H1 (cell line): ENCODE measurements at regions of chr14 and their contacts with region 1.

Region 1: DNA sequence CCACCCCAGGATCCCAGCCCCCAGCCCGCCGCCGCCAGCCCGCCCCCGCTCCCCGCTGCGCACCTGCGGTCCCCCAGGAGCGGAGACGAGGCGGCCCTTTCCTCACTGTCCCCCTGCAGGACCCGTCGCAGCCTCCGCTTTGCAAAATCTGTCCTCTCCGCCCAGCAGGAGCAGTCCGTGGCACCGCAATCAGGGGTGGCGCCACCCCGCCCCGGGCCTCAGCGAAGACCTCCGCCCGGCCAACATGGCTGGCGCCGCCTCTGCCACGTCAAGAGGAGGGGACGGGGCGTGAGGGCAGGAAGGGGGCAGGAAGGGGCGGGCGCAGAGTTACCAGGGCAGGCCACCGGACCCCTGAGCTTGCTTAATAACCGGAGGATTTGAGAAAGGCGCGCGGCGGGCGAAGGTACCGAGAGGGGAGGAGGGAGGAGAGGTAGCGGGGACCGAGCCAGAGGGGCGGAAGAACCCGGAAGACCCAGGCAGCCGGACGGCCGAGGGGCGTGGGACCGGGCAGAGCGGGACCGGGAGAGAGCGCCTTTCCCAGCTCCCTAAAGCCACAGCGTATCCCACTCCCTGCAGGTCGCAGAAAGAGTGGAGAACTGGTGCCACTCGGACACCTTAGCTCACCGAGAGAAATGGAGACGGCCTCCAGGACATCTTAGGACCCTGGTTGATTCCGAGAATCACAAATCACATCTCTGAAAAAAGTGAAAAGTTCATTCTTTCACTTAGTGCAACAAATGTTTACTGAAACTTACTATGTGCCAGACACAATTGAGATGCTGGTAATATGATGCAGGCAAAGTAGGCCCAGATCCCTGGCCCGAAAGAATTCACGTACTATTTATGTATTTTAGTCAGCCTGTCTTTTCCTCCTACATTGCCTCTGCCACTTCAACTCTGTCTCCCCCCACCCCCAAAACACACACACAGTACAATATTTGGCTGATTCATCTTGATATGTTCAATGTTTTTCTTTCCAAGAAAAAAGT is at the start of gene SEC23A:
- DNase-seq: peak; percentile 85 to 92
- H3K4me3 ChIP-seq: peak within 1 kb of the TSS; percentile 81 to 85 (median 82)
- H3K27ac ChIP-seq: peak within 1 kb of the TSS; percentile 79
- H3K4me1 ChIP-seq: peaks cover 0 to 3% (median 1%) of the 10 kb centered on the region in 4 experiments; a peak in 3 of 7 replicates
- H3K27me3 ChIP-seq: no peaks in the 10 kb centered on the region
- CTCF ChIP-seq: no peak
- EP300 ChIP-seq: no peak
- POLR2A ChIP-seq: peak; percentile 67 to 81
- RAD21 ChIP-seq: no peak
- total RNA-seq, gene SEC23A: 58.2 and 60.9 TPM in 2 replicates

Region 2: DNA sequence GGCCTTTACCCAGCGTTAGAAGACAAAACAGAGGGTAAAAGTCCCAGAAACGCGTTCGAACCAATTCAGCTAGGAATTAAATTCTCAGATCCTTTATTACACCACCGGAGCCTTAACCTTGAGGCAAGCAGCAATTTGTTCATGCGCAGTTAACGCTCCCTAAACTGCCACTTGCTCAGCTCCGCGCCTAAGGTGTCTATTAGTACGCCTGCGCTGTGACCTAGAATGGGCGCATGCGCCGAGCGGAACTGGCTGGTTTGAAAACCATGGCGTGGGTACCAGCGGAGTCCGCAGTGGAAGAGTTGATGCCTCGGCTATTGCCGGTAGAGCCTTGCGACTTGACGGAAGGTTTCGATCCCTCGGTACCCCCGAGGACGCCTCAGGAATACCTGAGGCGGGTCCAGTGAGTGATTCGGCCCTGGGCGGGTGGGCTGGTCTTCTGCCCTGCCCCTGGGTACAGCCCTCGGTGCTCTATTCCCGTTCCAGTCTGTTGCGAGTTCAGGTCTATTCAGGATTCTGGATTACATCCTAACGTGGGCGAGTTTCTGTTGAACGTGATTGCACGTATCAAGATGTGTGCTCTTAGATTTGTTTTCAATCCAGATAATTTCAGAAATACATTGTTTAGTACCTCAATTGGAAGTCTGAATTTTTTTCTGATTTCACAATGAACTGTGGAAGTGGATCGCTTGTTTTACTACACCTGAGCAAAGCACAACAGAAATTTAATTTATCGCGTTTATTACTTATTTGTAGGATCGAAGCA is 11.0 kb after region 1 on chr14 and contains the start of gene GEMIN2:
- CTCF ChIA-PET with region 1: interaction called, 3 read pairs
- POLR2A ChIA-PET with region 1: interaction called, 18 read pairs
- DNase-seq: peak; percentile 79 to 94
- H3K4me3 ChIP-seq: peak within 1 kb of the TSS; percentile 83 to 90 (median 87)
- H3K27ac ChIP-seq: peak within 1 kb of the TSS; percentile 33; the same call in 1 of the 2 replicates
- H3K4me1 ChIP-seq: peaks cover 0 to 2% (median 0%) of the 10 kb centered on the region in 4 experiments; a peak in 1 of 7 replicates
- H3K27me3 ChIP-seq: no peaks in the 10 kb centered on the region
- CTCF ChIP-seq: no peak
- EP300 ChIP-seq: no peak
- POLR2A ChIP-seq: peak; percentile 59 to 85
- RAD21 ChIP-seq: no peak
- total RNA-seq, gene GEMIN2: 29.1 TPM in 2 replicates

Region 3: DNA sequence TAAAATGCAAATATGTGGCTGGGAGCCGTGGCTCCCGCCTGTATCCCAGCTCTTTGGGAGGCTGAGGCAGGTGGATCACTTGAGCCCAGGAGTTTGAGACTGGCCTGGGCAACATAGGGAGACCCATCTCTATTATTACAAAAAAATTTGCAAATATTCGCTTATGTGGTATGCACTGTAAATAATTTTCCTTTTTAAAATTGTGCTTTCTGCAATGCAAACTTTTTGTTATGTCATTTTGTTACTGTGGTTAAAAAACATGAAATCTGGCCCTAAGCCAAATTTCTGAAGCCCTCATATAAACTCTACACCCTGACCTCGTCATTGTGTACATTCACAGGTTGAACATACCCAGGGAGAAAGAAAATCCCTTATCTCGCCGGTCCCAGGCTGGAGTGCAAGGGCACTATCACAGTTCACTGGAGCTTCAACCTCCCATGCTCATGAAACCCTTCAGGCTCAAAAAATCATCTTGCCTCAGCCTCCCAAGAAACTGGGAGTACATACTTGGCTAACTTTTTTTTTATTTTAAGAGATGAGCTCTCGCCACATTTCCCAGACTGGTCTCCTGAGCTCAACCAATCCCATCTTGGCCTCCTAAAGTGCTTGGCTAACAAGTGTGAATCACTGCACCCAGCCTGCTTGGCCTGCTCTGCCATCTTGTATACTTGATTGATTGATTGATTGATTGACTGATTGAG is 42.2 kb after region 1 on chr14:
- CTCF ChIA-PET with region 1: no interaction called
- POLR2A ChIA-PET with region 1: no interaction called
- DNase-seq: peak in 1 of 2 experiments; percentile 32
- H3K4me3 ChIP-seq: no peak overlapping the region
- H3K27ac ChIP-seq: no peak overlapping the region
- H3K4me1 ChIP-seq: 0 out of 7 replicates have a peak, but pooled peaks cover 0 to under 1% (median 0%) of the 10 kb centered on the region in 4 experiments
- H3K27me3 ChIP-seq: no peaks in the 10 kb centered on the region
- CTCF ChIP-seq: no peak
- EP300 ChIP-seq: no peak
- POLR2A ChIP-seq: no peak
- RAD21 ChIP-seq: no peak

Region 4: GRCh38 chr14:39169541-39169900 is 66.3 kb after region 1 on chr14:
- CTCF ChIA-PET with region 1: interaction called, 4 read pairs
- POLR2A ChIA-PET with region 1: interaction called, 23 read pairs
- DNase-seq: no peak
- H3K4me3 ChIP-seq: peak overlapping the region; percentile 81 to 95 (median 92)
- H3K27ac ChIP-seq: peak overlapping the region; percentile 86
- H3K4me1 ChIP-seq: peaks cover 3 to 6% (median 5%) of the 10 kb centered on the region in 4 experiments; a peak in 6 of 7 replicates
- H3K27me3 ChIP-seq: no peaks in the 10 kb centered on the region
- CTCF ChIP-seq: no peak
- EP300 ChIP-seq: no peak
- POLR2A ChIP-seq: no peak
- RAD21 ChIP-seq: no peak

Region 5: DNA sequence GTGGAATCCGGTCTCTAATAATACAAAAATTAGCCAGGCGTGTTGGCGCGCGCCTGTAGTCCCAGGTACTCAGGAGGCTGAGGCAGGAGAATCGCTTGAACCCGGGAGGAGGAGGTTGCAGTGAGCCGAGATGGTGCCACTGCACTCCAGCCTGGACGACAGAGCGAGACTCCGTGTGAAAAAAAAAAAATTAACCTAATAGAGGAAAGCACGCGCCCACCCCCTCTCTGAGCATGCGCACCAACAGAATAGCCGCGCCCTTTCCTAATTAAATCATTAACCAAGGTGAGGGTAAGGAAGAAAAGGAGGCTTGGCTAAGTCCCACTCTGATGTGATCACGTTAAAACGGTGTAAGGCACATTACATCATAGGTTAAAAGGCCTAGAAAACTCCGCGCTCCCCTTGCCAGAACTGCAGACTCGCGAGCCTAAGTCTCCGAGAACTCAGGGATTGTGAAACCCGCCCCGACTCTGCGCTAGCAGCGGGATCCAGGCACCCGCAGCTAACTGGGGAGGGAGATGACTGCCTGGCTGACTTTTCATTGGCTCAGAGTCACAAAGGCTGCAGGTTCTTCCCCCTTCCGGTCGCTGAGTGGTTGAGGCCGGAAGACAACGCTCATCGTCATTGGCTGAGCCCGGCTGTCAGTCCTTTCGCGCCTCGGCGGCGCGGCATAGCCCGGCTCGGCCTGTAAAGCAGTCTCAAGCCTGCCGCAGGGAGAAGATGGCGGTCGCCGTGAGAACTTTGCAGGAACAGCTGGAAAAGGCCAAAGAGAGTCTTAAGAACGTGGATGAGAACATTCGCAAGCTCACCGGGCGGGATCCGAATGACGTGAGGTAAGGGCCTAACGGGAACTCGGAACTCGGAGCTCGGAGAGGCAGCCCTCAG is 71.5 kb after region 1 on chr14 and contains the start of gene PNN:
- CTCF ChIA-PET with region 1: interaction called, 4 read pairs
- POLR2A ChIA-PET with region 1: interaction called, 23 read pairs
- DNase-seq: peak; percentile 91 to 97
- H3K4me3 ChIP-seq: peak within 1 kb of the TSS; percentile 88 to 97 (median 94)
- H3K27ac ChIP-seq: peak within 1 kb of the TSS; percentile 95
- H3K4me1 ChIP-seq: peaks cover 3 to 6% (median 5%) of the 10 kb centered on the region in 4 experiments; a peak in 6 of 7 replicates
- H3K27me3 ChIP-seq: no peaks in the 10 kb centered on the region
- CTCF ChIP-seq: no peak
- EP300 ChIP-seq: peak in 1 of 2 experiments; percentile 98; a peak in 2 of 3 replicates
- POLR2A ChIP-seq: peak; percentile 96 to 99
- RAD21 ChIP-seq: no peak
- total RNA-seq, gene PNN: 113 and 121 TPM in 2 replicates

Region 6: GRCh38 chr14:39181026-39181692 is 77.9 kb after region 1 on chr14:
- CTCF ChIA-PET with region 1: no interaction called
- POLR2A ChIA-PET with region 1: interaction called, 19 read pairs
- DNase-seq: no peak
- H3K4me3 ChIP-seq: no peak overlapping the region
- H3K27ac ChIP-seq: no peak overlapping the region; the same call in 1 of the 2 replicates
- H3K4me1 ChIP-seq: no peaks in the 10 kb centered on the region
- H3K27me3 ChIP-seq: no peaks in the 10 kb centered on the region
- CTCF ChIP-seq: no peak
- EP300 ChIP-seq: no peak
- POLR2A ChIP-seq: peak; percentile 29 to 68
- RAD21 ChIP-seq: no peak

Region 7: DNA sequence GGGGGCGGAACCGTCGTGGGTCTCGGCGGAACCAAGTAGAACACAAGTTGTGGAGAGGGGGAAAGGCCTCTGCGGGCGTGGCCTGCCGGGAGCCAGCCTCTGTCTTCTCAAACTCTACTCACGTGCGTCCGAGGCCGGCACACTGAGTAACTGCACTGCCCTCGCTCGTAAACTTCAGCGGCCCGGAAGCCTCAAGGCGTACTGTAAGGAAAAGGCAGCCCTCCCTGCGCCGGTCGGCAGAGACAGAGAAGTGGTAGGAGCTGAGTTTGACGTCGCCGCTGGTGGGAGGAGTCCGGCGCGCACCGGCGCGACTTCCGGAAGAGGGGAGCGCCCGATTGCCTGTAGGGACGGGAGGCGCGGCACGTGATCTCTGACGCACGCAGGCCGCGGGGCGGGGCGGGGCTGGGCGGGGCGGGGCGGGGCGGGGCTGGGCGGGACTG is 328.9 kb after region 1 on chr14 and contains the start of gene FBXO33:
- CTCF ChIA-PET with region 1: no interaction called
- POLR2A ChIA-PET with region 1: interaction called, 10 read pairs
- DNase-seq: peak; percentile 86 to 96
- H3K4me3 ChIP-seq: peak within 1 kb of the TSS; percentile 69 to 98 (median 94)
- H3K27ac ChIP-seq: peak within 1 kb of the TSS; percentile 100
- H3K4me1 ChIP-seq: no peaks in the 10 kb centered on the region; a peak in 1 of 7 replicates
- H3K27me3 ChIP-seq: no peaks in the 10 kb centered on the region
- CTCF ChIP-seq: no peak
- EP300 ChIP-seq: peak in 1 of 2 experiments; percentile 99; a peak in 2 of 3 replicates
- POLR2A ChIP-seq: 0 out of 3 replicates have a peak, but pooled peaks of 1 of the 2 experiments have one; percentile 5
- RAD21 ChIP-seq: no peak
- total RNA-seq, gene FBXO33: 10.8 and 11.5 TPM in 2 replicates